Vagina (tissue), 2 donors: ENCODE measurements at regions of chr16 and their contacts with region 1.

Region 1: GRCh38 chr16:85610508-85611332 is 2.4 kb upstream of the GSE1 start:
- DNase-seq: no peak
- H3K4me3 ChIP-seq: peak overlapping the region; percentile 68 to 78
- H3K27ac ChIP-seq: peak overlapping the region; percentile 84
- H3K4me1 ChIP-seq: peaks cover 78% of the 10 kb centered on the region
- H3K27me3 ChIP-seq: no peaks in the 10 kb centered on the region
- CTCF ChIP-seq: peak; percentile 98 to 99 (median 99)
- POLR2A ChIP-seq: no peak

Region 2: DNA sequence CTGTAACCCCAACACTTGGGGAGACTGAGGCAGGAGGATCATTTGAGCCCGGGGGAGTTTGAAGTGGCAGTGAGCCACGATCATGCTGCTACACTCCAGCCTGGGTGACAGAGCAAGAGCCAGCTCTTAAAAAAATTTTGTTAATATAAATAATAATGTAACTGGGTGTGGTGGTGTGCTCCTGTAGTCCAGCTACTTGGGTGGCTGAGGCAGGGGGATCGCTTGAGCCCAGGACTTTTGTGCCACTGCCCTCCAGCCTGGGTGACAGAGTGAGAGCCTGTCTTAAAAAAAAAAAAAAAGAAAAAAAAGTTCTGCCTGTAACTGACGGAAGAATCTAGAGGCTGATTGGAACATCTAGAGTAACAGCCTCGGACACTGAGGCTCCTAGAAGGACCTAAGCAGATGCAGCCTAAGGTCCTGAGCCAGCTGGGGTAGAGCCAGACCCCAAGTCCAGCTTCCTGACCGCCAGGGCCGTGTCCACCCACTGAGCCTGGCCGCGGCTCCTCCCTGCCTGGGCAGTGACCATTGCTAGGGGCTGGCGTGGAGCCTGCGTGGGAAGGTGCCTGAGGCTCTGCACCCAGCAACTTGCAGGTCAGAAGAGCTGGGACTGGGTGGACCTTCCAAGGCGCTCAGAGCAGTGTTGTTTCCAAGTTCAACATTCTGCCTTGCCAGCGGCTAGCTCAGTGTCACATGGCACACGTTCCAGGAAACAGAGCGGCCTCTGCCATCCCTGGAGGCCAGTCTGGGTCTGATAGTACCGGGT is 289.0 kb before region 1 on chr16:
- intact Hi-C with region 1: loop called (anchors 10 kb)
- DNase-seq: peak in 1 of 2 donors; percentile 96
- H3K4me3 ChIP-seq: peak overlapping the region in 1 of 2 donors; percentile 19
- H3K27ac ChIP-seq: peak overlapping the region; percentile 78
- H3K4me1 ChIP-seq: peaks cover 27% of the 10 kb centered on the region
- H3K27me3 ChIP-seq: no peaks in the 10 kb centered on the region
- CTCF ChIP-seq: no peak
- POLR2A ChIP-seq: no peak

Region 3: DNA sequence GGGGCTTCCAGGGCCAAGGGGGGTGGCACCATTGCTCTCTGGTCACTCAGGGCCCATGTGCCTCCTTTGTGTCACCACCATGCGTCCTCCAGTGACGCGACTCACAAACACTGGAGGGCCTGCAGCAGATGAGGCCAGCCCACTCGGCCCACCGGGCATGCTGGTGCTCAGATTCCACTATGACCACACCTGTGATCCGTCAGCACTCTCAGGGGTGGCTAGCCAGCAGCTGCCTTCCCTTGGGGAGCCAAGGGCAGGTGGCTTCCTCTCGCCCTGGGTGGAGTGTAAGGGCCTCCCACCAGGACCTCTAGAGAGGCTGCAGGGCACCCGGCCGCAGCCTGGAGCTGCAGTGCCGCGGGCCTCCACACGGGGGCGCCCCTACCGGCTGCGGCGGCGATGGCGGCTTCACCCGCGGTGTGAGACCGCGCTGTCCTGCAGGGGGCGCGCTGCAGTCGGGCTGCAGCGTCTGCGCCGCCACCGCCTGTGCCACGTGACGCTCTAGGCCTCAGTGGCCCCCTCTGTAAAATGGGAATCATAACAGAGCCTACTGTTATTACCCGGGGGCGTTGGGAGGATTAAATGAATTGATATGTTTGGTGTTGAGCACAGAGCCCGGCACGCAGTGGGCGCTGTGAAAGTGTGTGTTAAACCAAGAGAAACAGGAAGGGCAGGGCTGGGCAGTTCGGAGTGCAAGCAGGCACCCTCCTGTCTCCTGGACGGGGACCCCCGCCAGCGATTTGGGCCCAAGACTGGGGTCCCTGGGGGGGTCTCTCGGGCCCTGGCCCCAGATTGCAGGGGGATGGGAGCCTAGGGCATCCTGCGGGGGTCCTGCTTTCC is 190.0 kb before region 1 on chr16:
- intact Hi-C with region 1: loop called (anchors 2 kb)
- DNase-seq: no peak
- H3K4me3 ChIP-seq: no peak overlapping the region
- H3K27ac ChIP-seq: no peak overlapping the region
- H3K4me1 ChIP-seq: peaks cover 36% of the 10 kb centered on the region
- H3K27me3 ChIP-seq: no peaks in the 10 kb centered on the region
- CTCF ChIP-seq: peak; percentile 97 to 99 (median 97)
- POLR2A ChIP-seq: no peak

Region 4: DNA sequence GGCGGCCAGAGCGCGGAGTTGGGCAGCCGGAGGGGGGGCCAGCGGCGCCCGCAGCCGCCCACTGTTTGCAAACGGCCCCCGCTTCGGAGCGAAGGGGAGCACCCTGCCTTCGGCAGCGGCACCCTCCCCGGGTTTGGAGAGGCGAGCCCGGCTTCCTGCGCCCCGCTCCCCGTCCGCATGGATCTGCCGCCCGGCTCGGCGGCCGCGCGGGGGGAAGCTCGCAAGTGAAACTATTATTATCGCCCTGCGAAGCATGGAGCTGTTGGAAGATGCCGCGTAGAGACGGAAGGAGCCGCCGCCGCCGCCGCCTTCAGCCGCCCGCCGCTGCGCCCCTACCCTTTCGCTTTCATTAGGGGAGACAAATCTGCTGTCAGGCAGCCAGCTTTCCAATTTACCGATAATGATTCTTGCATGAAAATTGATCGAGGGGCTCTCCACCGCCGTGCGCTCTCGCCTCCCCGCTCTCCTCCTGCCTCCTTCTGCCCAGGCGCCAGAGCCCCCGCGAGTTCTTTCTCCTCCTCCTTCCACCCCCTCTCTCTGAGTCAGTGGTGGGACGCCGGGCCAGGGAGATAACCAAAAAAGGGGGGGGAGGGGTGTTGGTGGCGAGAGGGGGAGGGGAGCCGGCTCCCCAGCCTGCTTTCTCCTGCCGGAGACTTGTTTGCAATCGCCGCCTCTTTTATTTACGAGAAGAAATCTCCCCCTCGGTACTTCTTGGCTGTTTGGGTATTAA is 55.7 kb before region 1 on chr16:
- intact Hi-C with region 1: loop called (anchors 5 kb)
- DNase-seq: no peak
- H3K4me3 ChIP-seq: peak overlapping the region; percentile 67 to 74
- H3K27ac ChIP-seq: peak overlapping the region; percentile 82
- H3K4me1 ChIP-seq: peaks cover 60% of the 10 kb centered on the region
- H3K27me3 ChIP-seq: no peaks in the 10 kb centered on the region
- CTCF ChIP-seq: no peak
- POLR2A ChIP-seq: peak in 1 of 2 donors; percentile 47